OCI-LY7 (cell line): ENCODE measurements at regions of chr4 and their contacts with region 1.

Region 1: DNA sequence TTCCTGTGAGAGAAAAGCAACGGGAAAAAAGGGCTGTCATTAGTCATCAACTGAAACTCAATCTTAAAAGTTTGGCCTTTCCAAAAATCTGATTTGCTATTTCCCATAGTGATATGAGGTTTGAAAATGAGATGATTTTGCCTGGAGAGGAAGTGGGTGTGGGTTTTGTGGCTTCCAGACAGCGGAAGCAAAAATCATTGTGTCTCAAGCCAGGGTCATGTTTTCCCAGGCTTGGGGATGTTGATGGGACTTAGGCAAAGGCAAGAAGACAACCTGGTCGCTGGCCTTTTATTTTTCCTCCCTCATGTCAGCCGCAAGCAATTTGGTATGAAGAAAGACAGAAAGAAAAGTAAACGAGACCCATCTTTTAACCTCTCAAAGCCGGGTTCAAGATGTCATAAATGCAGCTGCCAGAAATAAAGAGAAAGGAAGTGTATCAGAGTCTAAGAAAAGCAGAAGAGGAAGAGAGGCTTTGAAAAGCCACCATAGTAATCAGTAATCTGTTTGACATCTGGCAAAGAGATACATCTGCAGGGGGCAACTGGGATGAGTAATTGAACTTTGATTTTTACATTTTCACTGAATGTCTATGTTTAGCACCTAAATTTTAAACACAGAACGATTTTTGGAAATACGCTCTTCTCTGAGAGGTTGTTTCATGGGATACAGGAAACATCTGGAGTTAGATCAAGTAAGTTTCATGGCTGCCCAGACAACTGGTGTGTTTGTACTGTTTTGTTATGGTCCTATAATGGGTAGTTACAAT is 521.6 kb upstream of the SLIT2 start:
- DNase-seq: peak; percentile 46
- H3K4me3 ChIP-seq: peak overlapping the region; percentile 34
- H3K27ac ChIP-seq: peak overlapping the region; percentile 37
- H3K4me1 ChIP-seq: peaks cover 15% of the 10 kb centered on the region
- CTCF ChIP-seq: no peak

Region 2: GRCh38 chr4:19675172-19675811 is 54.8 kb before region 1 on chr4:
- CTCF ChIA-PET with region 1: no interaction called
- POLR2A ChIA-PET with region 1: no interaction called
- intact Hi-C with region 1: loop called (anchors 5 kb)
- DNase-seq: peak; percentile 79
- H3K4me3 ChIP-seq: no peak overlapping the region
- H3K27ac ChIP-seq: peak overlapping the region; percentile 62
- H3K4me1 ChIP-seq: peaks cover 19% of the 10 kb centered on the region
- CTCF ChIP-seq: no peak

Region 3: GRCh38 chr4:20445933-20446723 is 716.1 kb after region 1 on chr4:
- CTCF ChIA-PET with region 1: no interaction called
- POLR2A ChIA-PET with region 1: interaction called, 12 read pairs
- intact Hi-C with region 1: no loop called
- DNase-seq: no peak
- H3K4me3 ChIP-seq: no peak overlapping the region
- H3K27ac ChIP-seq: no peak overlapping the region
- H3K4me1 ChIP-seq: no peaks in the 10 kb centered on the region
- CTCF ChIP-seq: no peak